B cell (primary cell): ENCODE measurements at regions of chr22 and their contacts with region 1.

Region 1: DNA sequence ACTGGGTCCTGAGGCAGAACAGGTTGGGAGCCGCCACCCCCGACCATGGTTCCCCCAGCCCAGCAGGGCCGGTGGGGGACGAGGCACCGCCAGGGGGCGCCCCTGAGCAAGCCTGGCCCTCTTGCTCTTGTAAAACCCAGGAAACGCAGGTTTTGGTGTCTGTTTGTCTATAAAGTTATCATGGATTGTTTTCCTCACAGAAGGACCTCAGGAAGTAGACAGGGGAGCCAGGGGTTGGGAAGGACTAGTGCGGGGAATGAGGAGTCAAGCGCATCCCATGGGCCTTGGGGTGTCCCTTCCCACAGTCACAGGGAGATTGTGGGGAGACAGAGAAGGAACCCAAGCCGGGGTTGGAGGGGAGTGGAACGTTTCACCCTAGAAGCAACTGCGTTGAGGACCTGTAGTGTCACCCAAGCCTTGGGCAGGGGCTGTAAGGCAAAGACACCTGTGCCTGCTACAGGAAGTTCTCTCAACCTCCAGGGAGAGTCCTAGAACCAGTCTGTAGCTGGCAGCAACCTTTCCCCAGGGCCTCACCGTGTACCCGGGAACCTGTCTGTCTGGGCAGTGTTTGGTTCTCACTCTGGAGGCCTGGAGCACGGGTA is 26.4 kb downstream of the KCTD17 start:
- DNase-seq: peak; percentile 75
- ATAC-seq: peak; percentile 62
- H3K4me3 ChIP-seq: no peak overlapping the region
- H3K4me3 Mint-ChIP-seq: no peak overlapping the region
- H3K27ac ChIP-seq: no peak overlapping the region
- H3K27ac Mint-ChIP-seq: peak overlapping the region; percentile 39
- H3K4me1 ChIP-seq: peaks cover 4 to 15% of the 10 kb centered on the region in 2 donors
- H3K4me1 Mint-ChIP-seq: peaks cover 22% of the 10 kb centered on the region
- H3K27me3 ChIP-seq: peaks cover 0 to 21% (median 2%) of the 10 kb centered on the region in 4 experiments
- H3K27me3 Mint-ChIP-seq: peaks cover 18% of the 10 kb centered on the region
- CTCF ChIP-seq: peak; percentile 96

Region 2: DNA sequence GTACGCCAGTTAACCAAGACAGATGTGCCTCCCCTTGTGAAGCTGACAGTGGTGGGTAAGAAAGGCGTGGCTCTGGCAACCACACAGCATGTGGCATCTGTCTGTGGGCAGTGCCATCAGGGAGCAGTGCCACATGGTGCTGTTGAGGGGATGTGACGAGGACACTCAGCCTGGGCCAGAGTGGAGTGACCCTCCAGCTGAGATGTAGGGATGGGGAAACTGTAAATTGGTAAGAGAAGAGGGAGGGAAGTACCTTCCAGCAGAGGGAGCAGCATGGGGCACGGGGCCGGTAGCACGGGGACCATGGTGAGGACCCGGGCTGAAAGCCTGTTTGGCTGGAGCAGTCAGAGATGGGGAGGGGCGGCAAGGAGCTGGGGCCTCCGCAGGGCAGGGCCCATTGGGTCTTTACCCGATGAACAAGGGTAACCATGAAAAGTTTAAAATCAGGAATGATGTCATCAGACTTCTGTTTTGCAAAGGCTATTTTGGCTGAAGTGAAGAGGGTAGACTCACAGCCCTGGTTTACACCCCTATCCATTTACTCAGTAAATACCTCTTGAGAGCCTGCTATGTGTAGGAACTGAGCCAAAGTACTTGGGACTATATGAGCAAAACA is 21.1 kb after region 1 on chr22:
- CTCF ChIA-PET with region 1: no interaction called
- POLR2A ChIA-PET with region 1: no interaction called
- intact Hi-C with region 1: no loop called
- DNase-seq: no peak
- ATAC-seq: no peak
- H3K4me3 ChIP-seq: no peak overlapping the region
- H3K4me3 Mint-ChIP-seq: no peak overlapping the region
- H3K27ac ChIP-seq: no peak overlapping the region
- H3K27ac Mint-ChIP-seq: no peak overlapping the region
- H3K4me1 ChIP-seq: no peaks in the 10 kb centered on the region
- H3K4me1 Mint-ChIP-seq: peaks cover 7% of the 10 kb centered on the region
- H3K27me3 ChIP-seq: peaks cover 0 to 22% (median 6%) of the 10 kb centered on the region in 4 experiments
- H3K27me3 Mint-ChIP-seq: peaks cover 39% of the 10 kb centered on the region
- CTCF ChIP-seq: no peak

Region 3: DNA sequence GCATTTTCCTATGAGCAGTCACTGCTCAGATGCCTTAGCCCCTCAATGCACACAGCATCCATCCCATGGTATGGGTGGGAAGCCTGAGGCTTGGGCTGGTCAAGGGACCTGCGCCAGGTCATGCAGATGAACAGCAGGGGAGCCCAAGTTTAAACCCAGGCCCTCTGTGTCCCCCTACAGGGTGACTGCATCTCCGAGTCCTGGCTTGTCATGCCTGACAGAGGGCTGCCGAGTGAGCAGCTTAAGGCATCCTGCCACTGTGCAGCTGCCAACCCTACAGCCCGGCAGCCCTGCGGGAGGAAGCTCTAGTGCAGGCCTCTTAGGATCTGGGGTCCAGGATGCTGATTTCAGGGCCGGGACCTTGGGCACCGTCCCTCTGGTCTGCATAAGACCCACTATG is 61.8 kb after region 1 on chr22:
- CTCF ChIA-PET with region 1: no interaction called
- POLR2A ChIA-PET with region 1: no interaction called
- intact Hi-C with region 1: no loop called
- DNase-seq: no peak
- ATAC-seq: peak; percentile 45
- H3K4me3 ChIP-seq: no peak overlapping the region
- H3K4me3 Mint-ChIP-seq: no peak overlapping the region
- H3K27ac ChIP-seq: no peak overlapping the region
- H3K27ac Mint-ChIP-seq: no peak overlapping the region
- H3K4me1 ChIP-seq: no peaks in the 10 kb centered on the region
- H3K4me1 Mint-ChIP-seq: peaks cover 8% of the 10 kb centered on the region
- H3K27me3 ChIP-seq: no peaks in the 10 kb centered on the region
- H3K27me3 Mint-ChIP-seq: no peaks in the 10 kb centered on the region
- CTCF ChIP-seq: no peak

Region 4: DNA sequence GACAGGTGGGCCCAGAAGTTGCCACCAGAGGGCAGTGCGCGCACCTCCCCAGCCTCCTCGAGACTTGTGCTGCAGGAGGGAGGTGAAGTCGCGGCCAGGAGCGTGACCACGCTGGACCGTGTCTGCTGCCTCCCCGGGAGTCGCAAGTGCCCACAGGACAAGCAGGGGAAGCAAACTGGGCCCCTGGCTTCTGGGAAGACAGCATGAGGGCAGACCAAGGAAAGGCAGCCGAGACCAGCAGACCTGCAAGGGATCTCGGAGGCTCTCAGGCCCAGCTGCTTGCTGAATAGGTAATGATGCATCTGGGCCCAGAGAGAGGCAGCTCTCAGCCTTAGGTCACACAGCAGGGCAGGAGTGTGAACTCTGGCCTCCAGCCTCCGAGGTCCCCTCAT is 88.7 kb after region 1 on chr22:
- CTCF ChIA-PET with region 1: interaction called, 5 read pairs
- POLR2A ChIA-PET with region 1: interaction called, 3 read pairs
- intact Hi-C with region 1: loop called (anchors 2 kb)
- DNase-seq: peak; percentile 84
- ATAC-seq: peak; percentile 59
- H3K4me3 ChIP-seq: no peak overlapping the region
- H3K4me3 Mint-ChIP-seq: peak overlapping the region; percentile 57
- H3K27ac ChIP-seq: no peak overlapping the region
- H3K27ac Mint-ChIP-seq: peak overlapping the region; percentile 47
- H3K4me1 ChIP-seq: peaks cover 17 to 46% of the 10 kb centered on the region in 2 donors
- H3K4me1 Mint-ChIP-seq: peaks cover 40% of the 10 kb centered on the region
- H3K27me3 ChIP-seq: no peaks in the 10 kb centered on the region
- H3K27me3 Mint-ChIP-seq: peaks cover 4% of the 10 kb centered on the region
- CTCF ChIP-seq: peak; percentile 92